Activated naive CD4-positive, alpha-beta T cell treated with anti-CD3 and anti-CD28 coated beads for 36 hours (primary cell): ENCODE measurements at regions of chr2 and their contacts with region 1.

Region 1: DNA sequence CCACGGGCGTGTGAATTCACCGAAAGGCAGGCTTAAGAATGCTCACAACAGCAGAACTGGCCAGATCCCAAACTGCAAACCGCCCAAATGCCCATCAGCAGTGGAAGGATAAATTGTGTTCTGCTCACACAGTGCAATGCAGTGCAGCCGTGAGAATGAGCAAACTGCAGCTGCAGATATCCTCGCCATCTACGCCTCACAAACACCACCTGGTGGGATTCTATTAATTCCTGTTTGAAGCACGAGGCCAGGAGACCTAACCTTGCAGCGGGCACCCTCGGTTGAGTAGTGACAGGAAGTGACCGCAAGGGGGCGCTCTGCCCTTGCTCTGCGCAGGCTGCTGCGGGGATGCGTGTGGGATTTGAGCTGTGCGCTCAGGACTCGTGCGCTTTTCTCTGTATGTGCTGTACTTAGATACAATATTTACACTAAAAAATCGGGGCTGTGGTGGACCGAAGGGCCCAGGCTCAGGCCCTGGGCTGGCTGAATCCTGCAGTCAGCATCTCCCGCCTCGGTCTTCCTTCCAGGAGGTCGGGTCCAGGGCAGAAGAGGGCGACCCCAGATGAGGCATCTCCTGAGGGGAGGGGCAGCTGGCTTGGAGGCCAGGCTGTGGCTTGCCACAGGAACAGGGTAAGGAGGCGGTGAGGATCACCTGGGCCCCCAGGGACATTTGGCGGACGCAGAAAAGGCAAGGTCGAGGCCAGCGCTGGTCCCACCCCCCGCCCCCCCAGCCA is 19.8 kb upstream of the PDIA6 start:
- DNase-seq: peak; percentile 90
- H3K4me3 Mint-ChIP-seq: no peak overlapping the region
- H3K27ac Mint-ChIP-seq: no peak overlapping the region
- H3K4me1 Mint-ChIP-seq: peaks cover 3% of the 10 kb centered on the region
- H3K27me3 Mint-ChIP-seq: no peaks in the 10 kb centered on the region

Region 2: GRCh38 chr2:10385933-10386773 is 446.2 kb before region 1 on chr2:
- CTCF ChIA-PET with region 1: no interaction called
- intact Hi-C with region 1: no loop called
- DNase-seq: no peak
- H3K4me3 Mint-ChIP-seq: no peak overlapping the region
- H3K27ac Mint-ChIP-seq: no peak overlapping the region
- H3K4me1 Mint-ChIP-seq: peaks cover 83% of the 10 kb centered on the region
- H3K27me3 Mint-ChIP-seq: no peaks in the 10 kb centered on the region

Region 3: DNA sequence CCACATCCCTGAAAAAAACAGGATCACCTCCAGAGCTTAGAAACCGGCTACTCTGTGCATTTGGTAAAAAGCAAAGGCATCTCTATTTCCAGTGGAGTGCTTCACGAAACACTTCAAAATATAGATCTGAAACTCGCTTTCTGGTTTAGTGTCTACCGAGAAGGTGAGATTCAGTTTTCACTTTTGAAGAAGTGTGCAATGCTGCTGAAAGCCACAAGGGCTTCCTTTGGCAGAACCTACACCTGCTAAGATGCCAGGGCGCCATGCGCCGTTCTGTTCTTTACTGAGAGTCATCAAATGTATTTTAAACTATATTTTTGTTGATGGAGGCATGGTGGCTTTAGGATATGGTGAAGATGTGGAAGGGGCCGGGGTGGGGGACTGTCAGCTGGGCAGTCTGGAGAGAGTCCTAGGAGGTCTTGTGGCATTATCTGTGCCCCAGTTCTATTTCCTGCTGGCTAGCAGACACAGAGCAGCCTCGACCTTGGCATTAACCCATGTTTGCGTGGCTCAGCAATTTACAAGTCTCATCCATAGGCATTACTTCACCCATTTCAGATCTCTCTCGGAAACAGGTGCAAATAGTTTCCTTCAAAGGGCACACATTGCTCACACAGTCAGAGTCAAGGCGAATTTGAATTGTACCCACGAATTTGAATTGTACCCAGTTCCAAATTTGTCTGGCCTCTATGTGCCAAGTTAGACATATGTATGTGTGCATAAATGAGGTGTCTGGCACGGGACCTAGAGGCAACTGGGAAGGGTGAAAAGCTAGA is 32.7 kb after region 1 on chr2:
- CTCF ChIA-PET with region 1: interaction called, 5 read pairs
- intact Hi-C with region 1: loop called (anchors 2 kb)
- DNase-seq: peak; percentile 45
- H3K4me3 Mint-ChIP-seq: no peak overlapping the region
- H3K27ac Mint-ChIP-seq: no peak overlapping the region
- H3K4me1 Mint-ChIP-seq: peaks cover 18% of the 10 kb centered on the region
- H3K27me3 Mint-ChIP-seq: peaks cover 21% of the 10 kb centered on the region

Region 4: DNA sequence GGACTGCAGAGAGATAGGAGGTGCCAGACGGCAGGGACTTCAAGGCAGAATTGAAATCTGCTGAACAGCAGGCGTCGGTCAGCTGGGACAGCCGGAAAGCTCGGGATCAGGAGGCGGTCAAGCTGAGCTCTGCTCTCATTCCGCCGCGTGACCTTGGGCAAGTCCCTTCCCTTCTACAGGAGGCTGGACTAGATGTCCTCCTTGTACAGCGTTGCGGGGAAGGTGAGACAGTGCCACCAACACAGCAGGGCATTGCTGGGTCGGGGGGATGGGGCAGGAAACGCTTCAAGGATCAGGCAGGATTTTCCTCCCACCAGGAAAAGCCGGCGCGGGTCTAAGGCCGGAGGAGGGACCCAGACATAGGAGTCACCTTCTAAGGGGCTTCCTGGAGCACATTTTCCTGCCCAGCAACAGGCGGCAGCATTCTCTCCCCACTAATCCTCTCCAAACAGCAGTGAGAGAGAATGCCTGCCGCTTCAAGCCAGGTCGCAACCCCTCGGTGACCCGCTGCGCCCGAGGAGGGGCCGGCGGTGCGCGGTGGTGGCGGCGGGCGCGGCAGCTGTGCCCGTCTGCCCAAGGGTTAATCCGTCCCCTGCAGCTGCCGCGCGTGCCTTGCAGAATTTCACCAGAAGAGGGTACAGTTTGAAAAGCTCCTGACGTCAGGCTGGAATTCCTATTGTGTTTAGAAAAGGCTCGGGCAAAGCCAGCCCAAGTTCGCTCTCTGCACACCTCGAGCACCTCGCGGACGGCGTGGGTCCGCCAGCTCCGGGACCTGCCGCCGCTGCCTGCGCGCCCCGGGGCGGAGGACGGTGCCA is 79.1 kb after region 1 on chr2 and contains the start of gene KCNF1:
- CTCF ChIA-PET with region 1: interaction called, 10 read pairs
- intact Hi-C with region 1: loop called (anchors 5 kb)
- DNase-seq: no peak
- H3K4me3 Mint-ChIP-seq: no peak within 1 kb of the TSS
- H3K27ac Mint-ChIP-seq: no peak within 1 kb of the TSS
- H3K4me1 Mint-ChIP-seq: peaks cover 9% of the 10 kb centered on the region
- H3K27me3 Mint-ChIP-seq: peaks cover 32% of the 10 kb centered on the region
- total RNA-seq, gene KCNF1: not detected

Region 5: GRCh38 chr2:11073251-11073650 is 240.9 kb after region 1 on chr2:
- CTCF ChIA-PET with region 1: interaction called, 3 read pairs
- intact Hi-C with region 1: loop called (anchors 5 kb)
- DNase-seq: peak; percentile 52
- H3K4me3 Mint-ChIP-seq: no peak overlapping the region
- H3K27ac Mint-ChIP-seq: no peak overlapping the region
- H3K4me1 Mint-ChIP-seq: peaks cover 4% of the 10 kb centered on the region
- H3K27me3 Mint-ChIP-seq: peaks cover 23% of the 10 kb centered on the region

Region 6: DNA sequence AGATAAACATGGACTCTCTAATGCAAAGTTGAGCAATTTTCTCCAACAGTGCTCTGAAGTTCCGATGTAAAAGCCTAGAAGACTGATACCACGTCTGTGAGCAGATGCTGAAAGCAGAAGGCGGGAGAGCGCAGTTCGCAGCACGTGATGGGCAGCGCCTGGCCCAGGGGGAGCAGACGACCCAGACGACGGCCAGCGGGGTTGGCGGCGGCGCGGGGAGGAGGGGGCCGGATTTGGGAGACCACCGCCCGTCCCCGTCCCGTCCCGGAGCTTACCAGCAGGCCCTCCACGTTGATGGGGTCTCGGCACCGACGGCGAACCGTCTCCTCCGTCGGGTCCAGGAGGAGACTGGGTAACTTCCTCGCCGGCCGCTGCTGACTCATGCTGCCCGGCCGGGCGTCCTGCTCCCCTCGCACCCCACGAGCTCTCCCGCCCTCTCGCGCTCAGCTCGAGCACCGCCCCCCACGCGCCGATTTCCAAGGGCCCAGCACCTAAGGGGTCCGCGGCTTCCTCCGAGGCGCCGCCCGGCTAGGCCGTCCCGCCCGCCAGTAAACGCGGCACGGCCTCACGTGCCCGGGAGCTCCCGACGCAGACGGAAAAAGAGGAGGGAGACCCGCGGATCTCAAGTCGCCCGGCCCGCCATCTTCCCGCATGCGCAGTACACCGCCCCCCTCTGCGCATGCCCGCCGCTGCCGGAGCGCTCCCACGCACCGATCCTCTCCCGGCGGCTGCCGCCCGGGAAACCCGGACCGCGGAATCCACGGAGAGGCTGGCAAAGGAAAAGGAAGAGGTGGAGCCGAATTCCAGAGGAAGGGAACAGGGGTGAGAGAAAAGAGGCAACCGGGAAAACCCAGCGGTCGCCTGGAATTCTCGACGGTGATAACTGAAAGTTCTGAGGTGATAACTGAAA is 633.4 kb after region 1 on chr2 and contains the start of gene E2F6:
- CTCF ChIA-PET with region 1: no interaction called
- intact Hi-C with region 1: loop called (anchors 5 kb)
- DNase-seq: peak; percentile 89
- H3K4me3 Mint-ChIP-seq: peak within 1 kb of the TSS; percentile 91
- H3K27ac Mint-ChIP-seq: peak within 1 kb of the TSS; percentile 83
- H3K4me1 Mint-ChIP-seq: peaks cover 40% of the 10 kb centered on the region
- H3K27me3 Mint-ChIP-seq: no peaks in the 10 kb centered on the region
- total RNA-seq, gene E2F6: 8.7 to 9.4 TPM